ENCODE measurements at regions of chr17 and their contacts with region 1.

Region 1: DNA sequence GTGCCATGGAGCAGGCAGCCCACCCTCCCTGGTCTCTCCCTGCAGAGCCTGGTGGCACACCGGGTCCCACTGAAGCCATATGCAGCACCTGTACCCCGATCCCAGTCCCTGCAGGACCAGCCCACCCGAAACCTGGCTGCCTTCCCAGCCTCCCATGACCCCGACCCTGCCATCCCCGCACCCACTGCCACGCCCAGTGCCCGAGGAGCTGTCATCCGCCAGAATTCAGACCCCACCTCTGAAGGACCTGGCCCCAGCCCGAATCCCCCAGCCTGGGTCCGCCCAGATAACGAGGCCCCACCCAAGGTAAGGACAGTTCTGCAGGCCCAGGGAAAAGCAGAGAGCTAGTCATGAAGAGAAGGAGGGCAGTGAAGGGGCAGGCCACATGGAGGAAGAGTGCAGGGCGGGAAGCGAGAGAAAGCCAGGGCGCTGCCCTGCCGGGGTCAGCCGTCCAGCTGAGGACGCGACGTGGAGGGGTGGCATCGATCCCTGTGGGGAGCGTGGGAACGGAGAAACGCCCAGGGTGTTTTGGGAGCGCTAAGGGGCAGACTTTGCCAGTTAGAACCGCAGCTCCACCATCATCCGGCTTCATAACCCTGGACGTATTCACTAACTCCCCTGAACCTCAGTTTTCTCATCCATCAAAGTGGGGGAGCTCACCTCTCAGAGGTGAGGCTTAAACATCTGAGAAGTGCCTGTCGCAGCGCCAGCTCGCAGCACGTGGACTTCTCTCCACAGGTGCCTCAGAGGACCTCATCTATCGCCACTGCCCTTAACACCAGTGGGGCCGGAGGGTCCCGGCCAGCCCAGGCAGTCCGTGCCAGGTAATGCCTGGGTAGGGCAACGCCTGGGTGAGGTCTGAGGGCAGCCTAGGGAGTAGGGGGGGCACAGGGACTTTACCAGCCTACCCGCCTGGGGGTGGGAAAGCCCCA is 7.7 kb upstream of the C17orf107 start:
- DNase-seq: no peak
- ATAC-seq: no peak
- H3K4me3 ChIP-seq: no peak overlapping the region
- H3K27ac ChIP-seq: no peak overlapping the region
- H3K4me1 ChIP-seq: no peaks in the 10 kb centered on the region
- H3K27me3 ChIP-seq: no peaks in the 10 kb centered on the region
- CTCF ChIP-seq: no peak

Region 2: GRCh38 chr17:4733073-4733531 is 158.6 kb before region 1 on chr17:
- CTCF ChIA-PET with region 1: interaction called, 11 read pairs
- POLR2A ChIA-PET with region 1: no interaction called
- in situ Hi-C with region 1: no loop called
- intact Hi-C with region 1: no loop called
- DNase-seq: no peak
- ATAC-seq: no peak
- H3K4me3 ChIP-seq: no peak overlapping the region
- H3K27ac ChIP-seq: no peak overlapping the region
- H3K4me1 ChIP-seq: no peaks in the 10 kb centered on the region; the same call in 1 of the 2 replicates
- H3K27me3 ChIP-seq: no peaks in the 10 kb centered on the region
- CTCF ChIP-seq: no peak

Region 3: DNA sequence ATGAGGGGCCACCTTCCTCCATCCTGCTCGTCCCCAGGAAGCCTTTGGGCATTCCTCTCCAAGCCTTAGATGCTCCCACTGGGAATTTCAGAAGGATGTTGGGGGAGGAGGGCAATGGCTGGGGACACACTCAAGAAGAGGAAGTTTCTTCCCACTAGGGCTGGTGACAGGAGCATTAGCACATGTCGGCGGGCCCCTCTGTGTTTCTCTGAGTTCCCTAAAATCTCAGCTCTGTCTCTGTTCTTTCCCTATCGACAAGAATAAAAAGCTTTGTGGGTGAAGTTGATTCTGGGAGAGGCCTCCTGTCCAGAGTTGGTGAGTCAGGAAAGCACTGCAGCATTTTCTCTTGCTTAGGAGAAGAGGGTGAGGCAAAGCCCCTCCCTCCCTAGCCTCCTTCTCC is 12.1 kb before region 1 on chr17:
- CTCF ChIA-PET with region 1: no interaction called
- POLR2A ChIA-PET with region 1: no interaction called
- in situ Hi-C with region 1: no loop called
- intact Hi-C with region 1: no loop called
- DNase-seq: no peak
- ATAC-seq: no peak
- H3K4me3 ChIP-seq: no peak overlapping the region
- H3K27ac ChIP-seq: no peak overlapping the region
- H3K4me1 ChIP-seq: no peaks in the 10 kb centered on the region
- H3K27me3 ChIP-seq: no peaks in the 10 kb centered on the region
- CTCF ChIP-seq: no peak

Measured in Panc1 (cell line).